ENCODE measurements at regions of chr2 and their contacts with region 1.

Region 1: GRCh38 chr2:143217512-143218115 is 88.4 kb downstream of the ARHGAP15 start:
- DNase-seq: no peak
- H3K4me3 ChIP-seq: no peak overlapping the region
- H3K27ac ChIP-seq: no peak overlapping the region
- H3K4me1 ChIP-seq: no peaks in the 10 kb centered on the region
- H3K27me3 ChIP-seq: no peaks in the 10 kb centered on the region
- CTCF ChIP-seq: no peak
- EP300 ChIP-seq: no peak
- POLR2A ChIP-seq: no peak

Region 2: DNA sequence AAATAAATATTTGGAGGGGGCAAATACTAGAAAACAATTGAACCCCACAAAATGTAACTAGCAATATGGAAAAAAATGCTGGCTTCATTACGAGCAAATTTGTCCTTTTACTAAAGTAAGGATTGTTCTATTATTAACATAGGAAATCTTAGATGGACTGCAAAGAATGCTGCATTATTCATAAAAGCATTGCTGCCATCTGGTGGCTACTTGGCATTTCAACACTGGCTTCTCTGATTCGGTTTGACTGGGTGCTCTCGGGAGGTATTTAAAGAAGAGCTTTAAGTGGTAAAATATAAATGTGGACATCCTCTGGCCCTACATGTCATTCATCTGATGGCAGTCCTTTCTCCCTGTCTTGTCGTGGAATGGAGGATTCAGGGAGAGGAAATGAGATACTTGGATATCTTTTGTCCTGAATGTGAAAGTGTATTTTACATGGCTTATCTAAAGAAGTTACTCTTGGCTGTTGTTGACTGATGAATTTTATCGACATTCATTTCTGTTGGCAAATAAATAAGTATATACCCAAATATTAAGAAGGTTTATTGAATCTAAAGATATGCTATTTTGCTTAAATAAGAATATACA is 41.8 kb after region 1 on chr2:
- in situ Hi-C with region 1: loop called in 1 of 4 experiments (anchors 10 kb)
- intact Hi-C with region 1: no loop called
- DNase-seq: peak; percentile 66
- H3K4me3 ChIP-seq: no peak overlapping the region
- H3K27ac ChIP-seq: no peak overlapping the region
- H3K4me1 ChIP-seq: peaks cover 0 to 17% (median 0%) of the 10 kb centered on the region in 4 donors
- H3K27me3 ChIP-seq: no peaks in the 10 kb centered on the region
- CTCF ChIP-seq: peak; percentile 63 to 68 (median 66)
- EP300 ChIP-seq: no peak
- POLR2A ChIP-seq: no peak